Mammary epithelial cell (primary cell): ENCODE measurements at regions of chr2 and their contacts with region 1.

Region 1: DNA sequence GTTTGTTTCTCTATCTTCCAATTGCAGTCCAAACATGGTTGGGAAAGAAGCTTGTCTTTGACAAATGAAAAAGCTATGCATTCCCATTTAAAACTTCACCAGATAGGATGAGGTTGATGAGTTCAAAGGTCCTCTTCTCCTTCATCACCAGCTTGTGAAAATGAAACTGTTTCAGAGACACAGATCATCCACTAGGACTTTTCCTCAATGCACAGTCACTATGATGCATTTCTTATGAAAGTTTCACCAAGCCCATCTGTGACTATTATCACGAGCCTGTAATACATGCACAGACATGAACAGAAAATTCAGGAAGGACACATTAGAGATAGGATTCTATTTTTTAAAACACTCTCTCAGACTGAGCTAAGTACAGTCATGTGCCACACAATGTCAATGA is 644.4 kb downstream of the PLCL1 start:
- DNase-seq: peak; percentile 80
- H3K4me3 ChIP-seq: no peak overlapping the region
- H3K27ac ChIP-seq: peak overlapping the region; percentile 87
- H3K4me1 ChIP-seq: peaks cover 11% of the 10 kb centered on the region
- H3K27me3 ChIP-seq: no peaks in the 10 kb centered on the region
- CTCF ChIP-seq: no peak

Region 2: DNA sequence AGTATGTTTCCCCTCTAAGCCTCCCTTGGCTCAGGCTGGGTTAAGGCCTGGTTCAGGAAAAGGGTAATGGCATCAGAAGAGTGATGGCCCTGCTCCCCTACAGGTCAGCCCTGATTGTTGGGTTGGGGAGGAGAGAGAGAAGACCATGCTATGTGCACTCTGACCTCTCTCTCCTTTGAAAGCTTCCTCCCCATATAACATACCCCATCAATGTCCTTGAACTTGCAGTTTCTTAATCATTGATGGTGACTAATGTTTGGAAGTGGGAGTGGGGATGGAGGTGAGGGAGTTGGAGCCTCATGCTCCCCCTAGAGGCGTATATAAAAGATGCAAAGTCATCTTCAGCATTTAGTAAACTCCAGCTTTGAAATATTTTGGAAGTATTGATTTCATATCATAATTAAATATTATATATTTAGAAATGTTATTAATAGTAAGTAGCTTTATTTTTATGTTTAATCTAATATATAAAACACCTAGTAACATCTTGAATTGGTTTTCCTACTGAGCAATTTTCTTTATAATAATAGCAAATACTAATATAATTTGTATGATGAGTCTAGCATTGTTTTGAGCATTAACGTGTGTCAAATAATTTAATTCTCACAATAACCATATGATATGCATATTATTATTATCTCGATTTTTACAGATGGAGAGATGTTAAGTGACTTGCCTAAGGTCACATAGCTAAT is 635.5 kb before region 1 on chr2:
- CTCF ChIA-PET with region 1: no interaction called
- dilution Hi-C with region 1: no loop called
- in situ Hi-C with region 1: no loop called
- intact Hi-C with region 1: no loop called
- DNase-seq: peak; percentile 41
- H3K4me3 ChIP-seq: no peak overlapping the region
- H3K27ac ChIP-seq: no peak overlapping the region
- H3K4me1 ChIP-seq: no peaks in the 10 kb centered on the region
- H3K27me3 ChIP-seq: no peaks in the 10 kb centered on the region
- CTCF ChIP-seq: peak; percentile 64 to 70

Region 3: DNA sequence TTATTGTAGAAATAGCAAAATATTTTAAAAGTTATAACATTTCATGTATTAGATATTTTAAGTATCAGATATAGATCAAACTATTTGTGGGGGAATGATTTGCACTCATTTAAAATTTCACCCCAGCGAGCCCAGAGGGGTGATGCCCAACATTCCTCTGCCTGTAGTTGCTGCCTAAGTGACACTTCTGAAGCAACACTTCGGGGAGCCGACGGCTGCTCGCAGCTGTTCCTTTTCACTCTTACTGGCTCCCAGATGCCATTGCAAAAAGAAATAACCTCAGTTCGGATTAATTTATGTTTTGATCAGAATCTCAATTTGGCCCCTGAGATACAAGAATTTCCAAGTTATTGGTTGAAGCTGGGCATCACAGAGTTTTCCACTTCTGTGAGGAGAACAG is 40.6 kb before region 1 on chr2:
- CTCF ChIA-PET with region 1: no interaction called
- dilution Hi-C with region 1: no loop called
- in situ Hi-C with region 1: no loop called
- intact Hi-C with region 1: loop called (anchors 5 kb)
- DNase-seq: no peak
- H3K4me3 ChIP-seq: no peak overlapping the region
- H3K27ac ChIP-seq: no peak overlapping the region
- H3K4me1 ChIP-seq: no peaks in the 10 kb centered on the region
- H3K27me3 ChIP-seq: no peaks in the 10 kb centered on the region
- CTCF ChIP-seq: no peak